Activated CD8-positive, alpha-beta T cell treated with anti-CD3 and anti-CD28 coated beads for 36 hours (primary cell): ENCODE measurements at regions of chr4 and their contacts with region 1.

Region 1: DNA sequence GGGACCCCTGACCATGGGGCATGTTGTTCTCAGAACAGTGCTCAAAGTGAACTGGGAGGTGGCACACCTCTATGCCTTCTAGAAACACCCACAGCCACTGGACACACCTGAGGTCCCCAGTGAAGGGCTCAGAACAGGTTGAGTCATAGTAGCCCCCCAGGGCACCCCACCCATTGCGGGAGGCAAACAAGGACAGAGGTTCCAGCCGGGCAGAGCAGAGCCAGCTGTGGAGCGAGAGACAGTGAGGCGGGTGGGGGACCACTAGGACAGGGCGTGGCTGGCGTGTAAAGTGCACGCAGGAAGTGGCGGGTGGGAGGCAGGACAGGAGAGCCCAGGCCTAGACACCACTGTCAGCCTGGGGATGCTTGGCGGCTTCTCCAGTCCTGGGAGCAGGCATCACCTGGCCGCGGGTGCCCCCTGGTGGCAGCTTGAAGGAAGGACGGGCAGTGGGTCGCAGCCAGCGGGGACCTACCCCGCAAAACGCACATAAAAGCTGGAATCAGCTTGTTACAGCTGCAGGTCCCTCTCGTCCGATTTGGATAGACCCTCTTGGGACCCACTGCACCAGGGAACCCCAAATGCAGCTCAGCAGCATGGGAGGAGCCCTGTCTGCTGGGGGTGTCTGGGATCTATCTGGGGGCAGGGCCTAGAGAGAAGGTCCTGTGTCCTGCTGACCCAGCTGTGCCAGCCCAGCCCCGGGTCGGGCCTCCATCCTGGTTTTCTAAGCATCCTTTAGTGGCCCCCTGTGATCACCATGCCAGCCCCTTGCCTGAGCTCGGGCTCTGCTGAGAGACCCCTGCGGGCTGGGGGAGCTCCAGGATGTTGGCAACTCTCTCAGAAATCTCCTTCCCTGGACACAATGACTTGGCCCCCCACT is 57.6 kb downstream of the WFS1 start:
- DNase-seq: peak; percentile 83
- ATAC-seq: peak; percentile 91
- H3K4me3 Mint-ChIP-seq: no peak overlapping the region
- H3K27ac Mint-ChIP-seq: no peak overlapping the region
- H3K4me1 Mint-ChIP-seq: no peaks in the 10 kb centered on the region
- H3K27me3 Mint-ChIP-seq: peaks cover 18% of the 10 kb centered on the region
- CTCF ChIP-seq: peak; percentile 89

Region 2: GRCh38 chr4:5998333-5998936 is 328.8 kb before region 1 on chr4:
- CTCF ChIA-PET with region 1: interaction called, 14 read pairs
- POLR2A ChIA-PET with region 1: no interaction called
- intact Hi-C with region 1: loop called (anchors 5 kb)
- DNase-seq: peak; percentile 62
- ATAC-seq: peak; percentile 65
- H3K4me3 Mint-ChIP-seq: no peak overlapping the region
- H3K27ac Mint-ChIP-seq: no peak overlapping the region
- H3K4me1 Mint-ChIP-seq: peaks cover 7% of the 10 kb centered on the region
- H3K27me3 Mint-ChIP-seq: peaks cover 2% of the 10 kb centered on the region
- CTCF ChIP-seq: peak; percentile 94

Region 3: GRCh38 chr4:6257247-6258025 is 69.8 kb before region 1 on chr4:
- CTCF ChIA-PET with region 1: interaction called, 304 read pairs
- POLR2A ChIA-PET with region 1: no interaction called
- intact Hi-C with region 1: no loop called
- DNase-seq: peak; percentile 36
- ATAC-seq: peak; percentile 69
- H3K4me3 Mint-ChIP-seq: no peak overlapping the region
- H3K27ac Mint-ChIP-seq: no peak overlapping the region
- H3K4me1 Mint-ChIP-seq: peaks cover 9% of the 10 kb centered on the region
- H3K27me3 Mint-ChIP-seq: peaks cover 26% of the 10 kb centered on the region
- CTCF ChIP-seq: no peak

Region 4: GRCh38 chr4:6269616-6270511 is 57.4 kb before region 1 on chr4 and contains the start of gene WFS1:
- CTCF ChIA-PET with region 1: interaction called, 17 read pairs
- POLR2A ChIA-PET with region 1: interaction called, 3 read pairs
- intact Hi-C with region 1: no loop called
- DNase-seq: peak; percentile 97
- ATAC-seq: peak; percentile 100
- H3K4me3 Mint-ChIP-seq: peak within 1 kb of the TSS; percentile 74
- H3K27ac Mint-ChIP-seq: no peak within 1 kb of the TSS
- H3K4me1 Mint-ChIP-seq: peaks cover 18% of the 10 kb centered on the region
- H3K27me3 Mint-ChIP-seq: peaks cover 9% of the 10 kb centered on the region
- CTCF ChIP-seq: no peak
- total RNA-seq, gene WFS1: 1.8 to 2.8 TPM

Region 5: DNA sequence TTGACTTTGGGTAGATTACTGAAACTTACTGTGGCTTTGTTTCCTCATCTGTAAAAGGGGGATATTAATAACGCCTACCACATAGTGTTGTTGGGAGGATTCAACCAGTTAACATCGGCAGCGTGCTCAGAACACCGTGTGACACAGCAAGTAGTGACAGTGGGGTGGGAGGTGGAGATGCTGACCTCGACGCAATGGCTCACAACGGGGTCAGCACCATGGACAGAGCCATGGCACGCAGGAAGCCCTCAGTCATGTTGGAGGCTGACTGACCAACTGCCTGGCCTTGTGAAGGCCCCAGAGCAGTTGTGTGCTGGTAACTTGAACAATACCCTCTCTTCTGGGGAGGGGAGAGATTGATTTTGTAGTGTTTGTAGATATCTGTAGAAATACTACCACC is 35.6 kb after region 1 on chr4:
- CTCF ChIA-PET with region 1: interaction called, 15 read pairs
- POLR2A ChIA-PET with region 1: no interaction called
- intact Hi-C with region 1: no loop called
- DNase-seq: peak; percentile 47
- ATAC-seq: no peak
- H3K4me3 Mint-ChIP-seq: no peak overlapping the region
- H3K27ac Mint-ChIP-seq: no peak overlapping the region
- H3K4me1 Mint-ChIP-seq: no peaks in the 10 kb centered on the region
- H3K27me3 Mint-ChIP-seq: peaks cover 3% of the 10 kb centered on the region
- CTCF ChIP-seq: no peak

Region 6: GRCh38 chr4:6470502-6471306 is 143.4 kb after region 1 on chr4:
- CTCF ChIA-PET with region 1: no interaction called
- POLR2A ChIA-PET with region 1: no interaction called
- intact Hi-C with region 1: no loop called
- DNase-seq: peak; percentile 12
- ATAC-seq: peak; percentile 60
- H3K4me3 Mint-ChIP-seq: no peak overlapping the region
- H3K27ac Mint-ChIP-seq: no peak overlapping the region
- H3K4me1 Mint-ChIP-seq: no peaks in the 10 kb centered on the region
- H3K27me3 Mint-ChIP-seq: peaks cover 49% of the 10 kb centered on the region
- CTCF ChIP-seq: no peak